Ovary (tissue), 10 donors: ENCODE measurements at regions of chr2 and their contacts with region 1.

Region 1: GRCh38 chr2:168455648-168456520 is at the start of gene CERS6:
- DNase-seq: peak; percentile 96 to 97 (median 97)
- H3K4me3 ChIP-seq: peak within 1 kb of the TSS; percentile 91
- H3K27ac ChIP-seq: peak within 1 kb of the TSS; percentile 54 to 79
- H3K4me1 ChIP-seq: peaks cover 2% of the 10 kb centered on the region
- H3K27me3 ChIP-seq: no peaks in the 10 kb centered on the region
- CTCF ChIP-seq: peak in 2 of 3 donors; percentile 20 to 22
- EP300 ChIP-seq: no peak
- POLR2A ChIP-seq: peak; percentile 67
- total RNA-seq, gene CERS6: 13.9 to 30.8 (median 29.3) TPM

Region 2: GRCh38 chr2:168521053-168521741 is 65.3 kb after region 1 on chr2:
- intact Hi-C with region 1: no loop called
- DNase-seq: no peak
- H3K4me3 ChIP-seq: no peak overlapping the region
- H3K27ac ChIP-seq: no peak overlapping the region
- H3K4me1 ChIP-seq: peaks cover 11% of the 10 kb centered on the region
- H3K27me3 ChIP-seq: no peaks in the 10 kb centered on the region
- CTCF ChIP-seq: no peak
- EP300 ChIP-seq: no peak
- POLR2A ChIP-seq: no peak

Region 3: GRCh38 chr2:168635065-168635577 is 179.2 kb after region 1 on chr2:
- intact Hi-C with region 1: loop called in 1 of 4 experiments (anchors 10 kb)
- DNase-seq: peak; percentile 45 to 57 (median 54)
- H3K4me3 ChIP-seq: no peak overlapping the region
- H3K27ac ChIP-seq: peak overlapping the region in 1 of 2 donors; percentile 24
- H3K4me1 ChIP-seq: peaks cover 12% of the 10 kb centered on the region
- H3K27me3 ChIP-seq: no peaks in the 10 kb centered on the region
- CTCF ChIP-seq: no peak
- EP300 ChIP-seq: no peak
- POLR2A ChIP-seq: no peak